ENCODE measurements at regions of chr22 and their contacts with region 1.

Region 1: DNA sequence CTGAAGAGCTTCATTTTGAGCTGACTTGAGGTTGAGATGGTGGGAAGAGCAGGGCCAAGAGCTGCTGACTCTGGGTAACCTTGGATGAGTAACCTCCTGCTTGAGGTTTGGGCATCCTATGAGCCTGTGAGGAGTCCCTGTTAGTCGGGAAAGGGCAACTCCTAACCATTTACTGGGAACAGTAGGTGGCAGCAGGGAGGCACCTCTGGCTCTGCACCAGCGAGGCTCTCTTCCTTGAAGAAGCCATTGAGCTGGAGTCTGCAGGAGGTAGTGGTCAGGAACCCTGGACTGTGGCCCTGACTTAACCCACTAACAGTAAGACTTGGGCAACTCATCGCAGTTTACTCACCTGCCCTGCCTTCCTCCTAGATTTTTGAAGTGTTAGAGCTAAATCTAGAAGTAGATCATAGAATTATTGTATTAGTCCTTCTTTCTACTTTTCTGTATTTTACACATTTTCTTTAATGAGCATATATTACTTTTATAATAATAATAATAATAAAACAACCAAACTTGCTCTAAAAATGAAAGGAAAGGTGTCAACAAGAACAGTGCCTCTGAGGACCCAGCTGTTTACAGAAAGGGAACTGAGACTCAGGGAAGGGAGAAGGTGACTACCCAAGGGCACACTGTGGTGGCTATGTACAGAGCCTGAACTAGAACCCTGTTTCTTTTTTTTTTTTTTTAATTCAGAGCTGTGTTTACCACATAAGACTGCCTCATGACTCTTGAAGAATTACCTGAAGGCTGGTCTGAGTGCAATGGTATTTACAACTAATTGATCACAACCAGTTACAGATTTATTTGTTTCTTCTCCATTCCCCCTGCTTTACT is 47.5 kb downstream of the MEI1 start:
- DNase-seq: peak; percentile 85
- H3K4me3 ChIP-seq: no peak overlapping the region
- H3K27ac ChIP-seq: no peak overlapping the region
- H3K4me1 ChIP-seq: no peaks in the 10 kb centered on the region
- H3K27me3 ChIP-seq: no peaks in the 10 kb centered on the region
- CTCF ChIP-seq: peak; percentile 78 to 92

Region 2: GRCh38 chr22:41458161-41458728 is 288.5 kb before region 1 on chr22:
- CTCF ChIA-PET with region 1: no interaction called
- dilution Hi-C with region 1: no loop called
- in situ Hi-C with region 1: no loop called
- intact Hi-C with region 1: no loop called
- DNase-seq: no peak
- H3K4me3 ChIP-seq: no peak overlapping the region
- H3K27ac ChIP-seq: no peak overlapping the region
- H3K4me1 ChIP-seq: no peaks in the 10 kb centered on the region
- H3K27me3 ChIP-seq: no peaks in the 10 kb centered on the region
- CTCF ChIP-seq: no peak

Region 3: GRCh38 chr22:41666661-41667258 is 80.0 kb before region 1 on chr22:
- CTCF ChIA-PET with region 1: no interaction called
- dilution Hi-C with region 1: no loop called
- in situ Hi-C with region 1: no loop called
- intact Hi-C with region 1: loop called (anchors 1 kb)
- DNase-seq: peak; percentile 85
- H3K4me3 ChIP-seq: peak overlapping the region; percentile 2 to 45 (median 21)
- H3K27ac ChIP-seq: peak overlapping the region; percentile 91
- H3K4me1 ChIP-seq: peaks cover 16% of the 10 kb centered on the region
- H3K27me3 ChIP-seq: no peaks in the 10 kb centered on the region
- CTCF ChIP-seq: peak; percentile 94 to 100

Region 4: GRCh38 chr22:41780746-41781505 is 34.1 kb after region 1 on chr22:
- CTCF ChIA-PET with region 1: no interaction called
- dilution Hi-C with region 1: no loop called
- in situ Hi-C with region 1: no loop called
- intact Hi-C with region 1: no loop called
- DNase-seq: no peak
- H3K4me3 ChIP-seq: no peak overlapping the region
- H3K27ac ChIP-seq: no peak overlapping the region
- H3K4me1 ChIP-seq: no peaks in the 10 kb centered on the region
- H3K27me3 ChIP-seq: no peaks in the 10 kb centered on the region
- CTCF ChIP-seq: no peak

Region 5: DNA sequence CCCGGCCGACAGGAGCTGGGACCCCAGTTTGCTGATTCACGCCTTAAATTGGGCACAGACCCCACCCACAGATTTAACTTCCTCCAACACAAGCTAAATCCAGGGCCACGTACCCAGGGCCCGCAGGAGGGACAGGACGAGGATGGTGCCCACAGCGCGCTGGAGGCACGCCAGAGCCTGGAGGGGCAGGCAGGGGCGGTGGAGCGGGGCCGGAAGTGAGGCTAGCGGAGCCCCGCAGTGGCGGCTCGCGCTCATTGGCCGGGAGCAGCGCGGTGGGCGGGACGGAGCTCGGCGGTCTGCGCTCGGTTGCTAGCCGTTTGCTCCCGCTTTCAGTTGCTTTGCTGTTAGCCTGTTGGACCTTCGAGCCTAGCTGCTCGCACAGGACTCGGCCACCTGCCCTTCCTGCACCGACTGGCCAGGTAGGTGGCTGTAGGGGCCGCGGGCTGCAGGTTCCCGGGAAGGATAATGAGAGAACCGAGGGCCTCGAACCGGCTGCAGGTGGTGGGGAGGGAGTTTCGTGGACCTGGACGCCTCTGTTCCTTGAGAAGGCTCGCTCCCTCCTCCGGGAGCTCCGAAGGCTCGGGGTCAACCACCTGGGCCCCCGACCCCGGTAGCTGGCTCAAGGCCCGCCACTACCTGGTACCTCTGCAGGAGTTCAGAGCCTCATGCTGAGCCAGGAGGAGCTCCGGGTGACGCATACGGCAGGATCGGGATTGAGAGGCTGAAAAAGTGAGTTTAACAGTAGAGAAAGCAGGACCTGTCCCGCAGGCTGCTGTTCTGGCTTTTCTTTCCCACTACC is 53.8 kb after region 1 on chr22 and contains the start of gene CCDC134:
- CTCF ChIA-PET with region 1: interaction called, 8 read pairs
- dilution Hi-C with region 1: no loop called
- in situ Hi-C with region 1: no loop called
- intact Hi-C with region 1: loop called (anchors 1 kb)
- DNase-seq: peak; percentile 75
- H3K4me3 ChIP-seq: peak within 1 kb of the TSS; percentile 89 to 100 (median 93)
- H3K27ac ChIP-seq: peak within 1 kb of the TSS; percentile 69
- H3K4me1 ChIP-seq: peaks cover 21% of the 10 kb centered on the region
- H3K27me3 ChIP-seq: no peaks in the 10 kb centered on the region
- CTCF ChIP-seq: no peak
- total RNA-seq, gene CCDC134: 9.4 to 10.5 TPM

Region 6: DNA sequence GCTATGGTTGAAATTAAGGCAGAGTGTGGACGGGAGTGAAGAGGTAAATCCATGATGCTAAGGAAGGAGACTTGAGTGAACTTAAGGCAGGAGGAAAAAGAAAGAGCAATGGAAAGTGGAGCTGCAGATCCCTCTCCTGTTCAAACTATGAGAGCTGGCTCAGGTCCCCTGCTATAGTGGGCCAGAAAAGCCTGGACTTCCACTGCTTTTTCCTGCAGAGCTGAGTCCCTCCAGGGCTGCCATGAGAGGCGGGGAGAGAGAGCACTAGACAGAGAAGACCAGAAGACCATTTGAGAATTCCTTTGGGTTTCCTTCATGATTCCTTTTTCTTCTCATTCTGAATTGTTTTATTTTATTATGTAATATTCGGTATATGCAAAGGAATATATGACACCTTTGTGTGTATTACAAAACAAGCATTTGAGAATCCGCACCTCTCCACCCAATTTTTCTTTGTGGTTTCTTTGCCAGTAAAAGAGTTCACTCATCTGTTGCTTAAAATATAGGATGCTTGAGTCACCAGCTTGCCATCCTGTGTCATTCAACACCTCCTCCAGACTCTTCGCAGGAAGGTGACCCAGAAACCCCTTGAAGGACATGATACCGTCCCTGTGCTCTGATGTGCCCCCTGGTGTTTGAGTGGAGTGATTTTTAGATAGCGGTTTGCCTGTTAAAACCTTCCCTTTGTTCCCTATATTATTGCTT is 110.5 kb after region 1 on chr22:
- CTCF ChIA-PET with region 1: interaction called, 13 read pairs
- dilution Hi-C with region 1: no loop called
- in situ Hi-C with region 1: no loop called
- intact Hi-C with region 1: loop called (anchors 1 kb)
- DNase-seq: peak; percentile 88
- H3K4me3 ChIP-seq: no peak overlapping the region
- H3K27ac ChIP-seq: peak overlapping the region; percentile 41
- H3K4me1 ChIP-seq: peaks cover 59% of the 10 kb centered on the region
- H3K27me3 ChIP-seq: no peaks in the 10 kb centered on the region
- CTCF ChIP-seq: peak; percentile 66

Region 7: DNA sequence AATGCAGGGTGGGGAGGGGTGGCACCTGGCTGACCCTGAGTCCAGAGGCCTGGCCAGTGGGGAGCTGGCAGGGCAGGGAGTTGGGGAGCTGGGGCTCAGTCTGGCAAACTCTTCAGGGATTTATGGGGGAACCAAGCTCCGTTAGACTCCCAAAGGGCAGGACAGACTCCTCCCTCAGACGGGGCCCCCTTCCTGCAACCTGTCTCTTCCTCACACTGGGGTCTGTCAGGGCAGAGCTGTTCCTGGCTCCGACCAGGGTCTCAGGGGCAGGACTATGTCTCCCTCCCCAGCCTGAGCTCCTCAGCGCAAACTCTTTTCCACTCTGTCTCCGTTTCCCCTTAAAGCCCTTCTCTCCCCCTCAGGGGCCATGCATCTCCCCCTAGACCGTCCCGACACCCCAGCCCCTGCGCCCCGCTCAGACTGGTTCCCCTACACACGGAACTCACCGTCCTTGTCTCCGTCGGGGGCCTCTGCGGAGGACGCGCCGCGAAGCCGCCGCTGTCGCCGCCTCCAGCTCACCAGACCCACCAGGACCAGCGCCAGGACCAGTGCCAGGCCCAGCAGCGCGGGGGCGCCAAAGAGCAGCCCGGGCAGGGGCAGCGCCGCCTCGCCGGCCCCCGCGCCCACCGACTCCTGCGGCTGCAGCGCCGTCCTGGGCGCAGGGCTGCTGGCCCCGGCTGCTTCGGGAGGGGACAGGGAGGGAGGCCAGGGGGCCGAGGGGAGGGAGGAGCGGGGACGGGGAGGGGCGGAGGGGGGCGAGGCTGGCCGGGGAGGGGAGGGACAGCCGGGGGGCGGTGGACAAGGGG is 179.1 kb after region 1 on chr22:
- CTCF ChIA-PET with region 1: no interaction called
- dilution Hi-C with region 1: loop called (anchors 5 kb)
- in situ Hi-C with region 1: no loop called
- intact Hi-C with region 1: loop called (anchors 5 kb)
- DNase-seq: no peak
- H3K4me3 ChIP-seq: peak overlapping the region in 2 of 3 experiments; percentile 24 to 37
- H3K27ac ChIP-seq: no peak overlapping the region
- H3K4me1 ChIP-seq: peaks cover 7% of the 10 kb centered on the region
- H3K27me3 ChIP-seq: peaks cover 4% of the 10 kb centered on the region
- CTCF ChIP-seq: peak; percentile 60 to 68

Region 8: DNA sequence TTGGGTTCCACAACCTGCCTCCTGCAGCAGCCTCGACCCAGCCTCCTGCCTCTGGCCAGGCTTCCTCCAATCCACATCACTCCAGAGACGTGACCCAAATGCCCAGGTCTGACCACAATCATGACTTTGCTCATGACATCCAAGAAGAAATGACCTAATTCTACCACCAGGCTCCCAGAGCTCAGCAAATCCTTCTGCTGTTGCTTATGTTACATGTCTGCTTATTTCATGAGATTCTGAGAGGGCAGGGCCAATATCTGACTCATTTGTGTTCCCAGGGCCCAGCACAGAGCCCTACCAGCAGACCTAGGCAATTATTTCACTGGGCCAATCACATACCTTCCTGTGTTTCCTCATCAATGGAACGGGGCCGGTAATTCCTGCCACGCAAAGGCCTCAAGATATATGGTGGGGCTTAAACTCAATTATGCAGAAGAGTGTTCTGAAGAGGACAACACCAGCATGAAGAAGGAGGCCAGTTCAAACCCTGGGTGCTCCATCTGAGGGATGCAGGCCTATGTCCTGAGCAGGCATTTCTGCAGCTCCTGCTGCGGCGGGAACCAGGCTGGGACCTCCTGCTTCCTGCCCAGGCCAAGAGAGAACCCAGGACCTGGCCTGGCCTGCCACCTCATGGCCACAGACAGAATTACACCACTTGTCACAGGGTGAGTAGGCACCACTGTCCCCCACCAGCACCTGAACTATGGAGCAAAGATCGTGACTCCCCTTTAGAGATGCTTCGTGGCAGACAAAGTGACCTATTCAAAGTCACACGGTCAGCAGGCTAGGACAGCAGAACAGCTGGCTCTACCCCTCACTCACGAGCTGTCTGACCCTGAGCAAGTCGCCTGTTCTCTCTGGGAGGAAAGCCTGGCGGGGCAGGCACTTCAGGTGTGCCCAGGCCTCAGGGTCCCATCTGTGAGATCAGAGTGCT is 194.3 kb after region 1 on chr22:
- CTCF ChIA-PET with region 1: interaction called, 19 read pairs
- dilution Hi-C with region 1: no loop called
- in situ Hi-C with region 1: no loop called
- intact Hi-C with region 1: loop called (anchors 1 kb)
- DNase-seq: peak; percentile 71
- H3K4me3 ChIP-seq: no peak overlapping the region
- H3K27ac ChIP-seq: peak overlapping the region; percentile 18
- H3K4me1 ChIP-seq: peaks cover 10% of the 10 kb centered on the region
- H3K27me3 ChIP-seq: no peaks in the 10 kb centered on the region
- CTCF ChIP-seq: peak; percentile 86 to 88

Measured in mammary epithelial cell (primary cell).